ENCODE measurements at regions of chr9 and their contacts with region 1.

Region 1: GRCh38 chr9:3467593-3468219 is 58.1 kb downstream of the RFX3 start:
- DNase-seq: peak; percentile 75
- H3K4me3 Mint-ChIP-seq: no peak overlapping the region
- H3K27ac Mint-ChIP-seq: no peak overlapping the region
- H3K4me1 Mint-ChIP-seq: peaks cover 12% of the 10 kb centered on the region
- H3K27me3 Mint-ChIP-seq: no peaks in the 10 kb centered on the region

Region 2: GRCh38 chr9:3647652-3648051 is 179.9 kb after region 1 on chr9:
- CTCF ChIA-PET with region 1: interaction called, 3 read pairs
- intact Hi-C with region 1: loop called (anchors 1 kb)
- DNase-seq: no peak
- H3K4me3 Mint-ChIP-seq: no peak overlapping the region
- H3K27ac Mint-ChIP-seq: no peak overlapping the region
- H3K4me1 Mint-ChIP-seq: no peaks in the 10 kb centered on the region
- H3K27me3 Mint-ChIP-seq: no peaks in the 10 kb centered on the region

Region 3: DNA sequence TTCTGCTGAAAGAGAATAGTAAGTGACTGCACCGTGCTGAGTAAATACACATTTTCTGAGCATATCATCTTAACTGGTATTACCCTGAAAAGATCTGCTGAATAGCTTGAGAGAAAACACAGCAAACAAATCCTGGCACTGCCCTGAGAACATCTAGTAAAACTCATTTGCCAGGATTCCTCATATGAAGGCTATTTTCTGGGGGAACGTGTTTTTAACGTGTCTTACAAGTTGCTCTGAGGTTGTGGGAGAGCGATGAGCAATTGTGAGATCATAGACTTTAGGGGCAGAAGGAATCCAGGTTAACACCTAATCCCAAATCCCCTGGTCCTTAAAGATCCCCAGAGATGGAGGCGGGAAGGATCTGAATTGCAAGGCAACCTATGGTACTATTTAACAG is 390.0 kb after region 1 on chr9:
- CTCF ChIA-PET with region 1: no interaction called
- intact Hi-C with region 1: loop called (anchors 5 kb)
- DNase-seq: no peak
- H3K4me3 Mint-ChIP-seq: no peak overlapping the region
- H3K27ac Mint-ChIP-seq: no peak overlapping the region
- H3K4me1 Mint-ChIP-seq: no peaks in the 10 kb centered on the region
- H3K27me3 Mint-ChIP-seq: peaks cover 3% of the 10 kb centered on the region

Region 4: GRCh38 chr9:4117835-4118610 is 650.3 kb after region 1 on chr9:
- CTCF ChIA-PET with region 1: interaction called, 3 read pairs
- intact Hi-C with region 1: loop called (anchors 2 kb)
- DNase-seq: peak; percentile 62
- H3K4me3 Mint-ChIP-seq: no peak overlapping the region
- H3K27ac Mint-ChIP-seq: no peak overlapping the region
- H3K4me1 Mint-ChIP-seq: no peaks in the 10 kb centered on the region
- H3K27me3 Mint-ChIP-seq: no peaks in the 10 kb centered on the region

Region 5: DNA sequence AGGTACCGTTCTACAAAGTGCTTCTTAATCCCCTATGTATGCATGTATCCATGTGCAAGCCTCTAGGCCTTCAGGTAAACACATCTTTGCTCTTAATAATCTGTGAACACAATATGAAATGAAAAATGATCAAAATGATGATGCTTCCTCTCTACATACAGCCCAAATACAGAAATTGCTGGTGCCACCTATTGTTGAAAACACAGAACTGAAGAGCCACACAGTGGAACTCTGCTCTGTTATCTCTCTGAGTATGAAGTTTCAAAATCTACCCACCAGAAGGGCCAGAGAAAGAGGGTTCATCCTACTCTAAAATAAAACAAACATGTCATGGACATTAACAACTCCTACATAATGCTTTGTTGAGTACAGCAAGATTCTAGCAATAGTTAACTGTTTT is 760.9 kb after region 1 on chr9:
- CTCF ChIA-PET with region 1: no interaction called
- intact Hi-C with region 1: loop called (anchors 1 kb)
- DNase-seq: no peak
- H3K4me3 Mint-ChIP-seq: no peak overlapping the region
- H3K27ac Mint-ChIP-seq: no peak overlapping the region
- H3K4me1 Mint-ChIP-seq: peaks cover 16% of the 10 kb centered on the region
- H3K27me3 Mint-ChIP-seq: no peaks in the 10 kb centered on the region

Measured in activated naive CD4-positive, alpha-beta T cell treated with anti-CD3 and anti-CD28 coated beads for 36 hours (primary cell).